HEK293T (cell line): ENCODE measurements at regions of chr6 and their contacts with region 1.

Region 1: DNA sequence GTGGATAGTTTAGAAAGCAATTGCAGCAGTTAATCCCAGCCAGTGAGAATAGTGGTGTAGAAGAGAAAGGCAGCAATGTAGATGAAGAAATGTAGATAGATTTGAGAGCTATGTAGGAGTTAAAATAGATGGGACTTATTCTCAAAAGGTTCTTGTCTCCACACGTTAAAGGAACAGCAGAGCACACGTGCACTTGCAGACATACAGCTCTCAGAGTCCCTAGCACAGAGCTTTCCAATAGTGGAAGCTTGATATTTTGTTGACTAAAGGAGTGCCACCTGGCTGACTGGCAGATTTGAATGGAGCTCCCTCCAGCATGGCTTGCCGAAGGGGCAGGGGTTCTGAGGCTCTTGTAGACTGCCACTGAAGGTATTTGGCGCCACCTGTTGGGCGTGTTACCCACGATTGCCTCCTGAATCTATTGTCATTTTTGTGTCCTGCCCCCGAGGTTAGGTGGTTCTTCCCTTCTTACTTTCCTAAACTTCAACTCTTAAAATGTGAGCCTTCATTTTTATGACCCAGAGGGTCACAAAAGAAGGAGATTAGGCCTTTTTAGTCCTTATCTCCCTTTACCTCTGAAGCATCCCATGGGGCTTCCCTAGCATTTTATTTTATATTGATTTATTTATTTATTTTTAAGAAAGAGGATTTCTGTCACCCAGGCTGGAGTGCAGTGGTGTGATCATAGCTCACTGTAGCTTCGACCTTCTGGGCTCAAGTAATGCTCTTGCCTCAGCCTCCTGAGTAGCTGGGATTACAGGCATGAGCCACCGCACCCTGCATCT is 16.4 kb downstream of the BRD2 start:
- DNase-seq: peak; percentile 77

Region 2: GRCh38 chr6:32879691-32880090 is 105.1 kb before region 1 on chr6:
- CTCF ChIA-PET with region 1: interaction called, 12 read pairs
- POLR2A ChIA-PET with region 1: no interaction called
- DNase-seq: no peak

Region 3: DNA sequence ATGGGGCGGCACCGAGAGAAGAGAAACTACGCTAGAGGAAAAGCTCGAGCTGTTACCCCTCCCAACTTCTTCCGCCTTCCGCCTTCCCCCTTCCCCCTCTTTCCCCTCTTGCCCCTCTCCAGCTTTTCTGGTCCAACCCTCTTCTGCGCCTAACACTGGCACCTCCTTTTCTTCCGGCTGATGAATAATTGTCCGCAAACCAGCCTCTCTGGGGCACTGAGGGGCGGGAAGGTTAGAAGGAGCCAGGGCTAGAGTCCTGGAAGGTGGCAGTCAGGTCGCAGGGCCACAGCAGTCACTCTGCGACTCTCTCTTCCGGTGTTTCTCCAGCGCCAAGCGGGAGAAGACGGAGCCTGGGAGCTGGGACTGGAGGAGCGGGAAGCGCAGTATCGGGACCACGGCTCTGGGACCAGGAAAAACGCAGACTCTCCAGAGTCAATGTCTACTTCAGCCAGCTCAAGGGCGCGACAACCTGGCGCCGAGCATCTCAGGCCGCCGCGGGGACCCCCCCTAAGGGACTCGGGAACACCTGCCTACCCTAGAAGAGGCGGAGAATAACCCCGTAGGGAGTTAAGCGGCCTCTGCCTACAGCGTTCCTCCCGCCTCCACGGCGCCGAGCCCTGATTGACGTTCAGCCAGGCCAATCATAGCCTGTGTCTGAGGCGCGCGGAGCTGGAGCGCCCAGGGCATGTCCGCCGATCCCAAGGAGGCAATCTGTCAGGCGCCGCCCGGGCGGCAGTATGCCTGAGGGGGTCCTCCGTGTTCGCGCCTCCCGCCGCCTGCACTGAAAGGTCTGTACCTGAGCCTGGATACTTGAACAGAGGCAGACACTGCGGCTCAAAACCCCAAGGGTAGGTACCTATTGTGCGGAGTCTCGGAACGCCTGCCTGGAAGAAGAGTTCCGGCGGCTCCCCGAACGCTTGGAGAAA is 90.5 kb before region 1 on chr6:
- CTCF ChIA-PET with region 1: interaction called, 18 read pairs
- POLR2A ChIA-PET with region 1: interaction called, 55 read pairs
- DNase-seq: peak; percentile 99

Region 4: GRCh38 chr6:32933636-32934085 is 51.1 kb before region 1 on chr6:
- CTCF ChIA-PET with region 1: interaction called, 79 read pairs
- POLR2A ChIA-PET with region 1: interaction called, 12 read pairs
- DNase-seq: peak; percentile 78

Region 5: GRCh38 chr6:32952817-32953739 is 31.7 kb before region 1 on chr6 and contains the start of gene HLA-DMA:
- CTCF ChIA-PET with region 1: interaction called, 37 read pairs
- POLR2A ChIA-PET with region 1: interaction called, 7 read pairs
- DNase-seq: peak; percentile 55

Region 6: GRCh38 chr6:33132081-33132524 is 147.3 kb after region 1 on chr6:
- CTCF ChIA-PET with region 1: no interaction called
- POLR2A ChIA-PET with region 1: no interaction called
- DNase-seq: no peak